ENCODE measurements at regions of chr17 and their contacts with region 1.

Region 1: DNA sequence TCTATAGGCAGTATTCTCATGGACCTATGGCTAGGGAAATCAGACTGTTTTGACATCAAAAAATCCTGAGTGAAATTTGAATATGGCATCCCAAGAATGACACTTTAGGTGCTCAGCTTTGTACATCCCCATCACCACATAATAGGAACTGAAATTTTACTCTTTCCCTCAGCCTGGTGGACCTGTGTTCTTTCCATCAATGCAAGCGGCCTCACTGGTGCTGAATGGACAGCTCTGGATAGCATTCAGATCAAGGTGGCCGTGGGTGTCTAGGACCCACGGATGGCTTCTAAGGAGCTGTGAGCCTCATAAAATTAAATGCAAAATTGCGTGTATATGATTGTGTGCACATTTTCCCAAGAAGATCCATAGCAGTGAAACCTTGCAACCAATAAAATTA is 152.6 kb downstream of the MAP2K6 start:
- DNase-seq: no peak
- H3K4me3 ChIP-seq: no peak overlapping the region
- H3K27ac ChIP-seq: no peak overlapping the region
- H3K4me1 ChIP-seq: peaks cover 0 to 4% (median 0%) of the 10 kb centered on the region in 4 donors
- H3K27me3 ChIP-seq: no peaks in the 10 kb centered on the region
- CTCF ChIP-seq: no peak

Region 2: DNA sequence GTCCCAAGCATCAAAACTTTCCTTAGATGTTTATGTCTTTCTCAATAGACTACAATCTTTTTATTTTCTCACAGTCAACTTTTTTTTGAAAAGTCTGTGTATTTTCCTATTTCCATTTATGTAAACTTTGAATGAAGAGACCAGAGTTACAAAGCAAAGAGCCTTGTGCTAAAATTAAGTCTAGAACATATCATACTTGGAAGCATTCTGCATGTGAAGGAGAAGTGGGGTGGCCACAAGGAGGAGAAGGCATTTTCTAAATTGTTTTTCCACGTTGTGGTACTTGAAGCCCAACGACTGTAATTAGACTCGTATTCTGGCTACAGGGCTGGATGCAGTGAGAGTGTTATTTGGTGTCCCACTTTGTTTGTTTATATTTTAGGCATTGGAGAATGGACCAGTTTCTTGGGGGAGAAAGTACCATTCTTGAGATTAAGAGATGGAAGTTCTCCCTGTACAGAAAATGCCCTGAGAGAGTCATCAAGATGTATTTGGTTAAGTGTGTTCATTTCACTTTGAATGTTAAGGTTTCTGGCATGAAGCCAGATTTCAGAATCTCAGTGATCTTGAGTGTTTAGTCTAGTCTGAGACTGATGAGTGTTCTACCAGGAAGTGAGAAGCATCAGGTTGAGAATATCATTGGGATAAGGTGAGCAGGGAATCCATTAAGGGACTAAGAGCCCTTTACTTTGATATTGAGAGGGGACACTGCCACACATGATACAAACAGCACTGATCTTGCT is 81.1 kb before region 1 on chr17:
- intact Hi-C with region 1: no loop called
- DNase-seq: no peak
- H3K4me3 ChIP-seq: peak overlapping the region; percentile 34 to 42
- H3K27ac ChIP-seq: peak overlapping the region; percentile 73 to 74
- H3K4me1 ChIP-seq: peaks cover 0 to 33% (median 10%) of the 10 kb centered on the region in 4 donors
- H3K27me3 ChIP-seq: no peaks in the 10 kb centered on the region
- CTCF ChIP-seq: peak in 1 of 2 experiments; percentile 11

Region 3: DNA sequence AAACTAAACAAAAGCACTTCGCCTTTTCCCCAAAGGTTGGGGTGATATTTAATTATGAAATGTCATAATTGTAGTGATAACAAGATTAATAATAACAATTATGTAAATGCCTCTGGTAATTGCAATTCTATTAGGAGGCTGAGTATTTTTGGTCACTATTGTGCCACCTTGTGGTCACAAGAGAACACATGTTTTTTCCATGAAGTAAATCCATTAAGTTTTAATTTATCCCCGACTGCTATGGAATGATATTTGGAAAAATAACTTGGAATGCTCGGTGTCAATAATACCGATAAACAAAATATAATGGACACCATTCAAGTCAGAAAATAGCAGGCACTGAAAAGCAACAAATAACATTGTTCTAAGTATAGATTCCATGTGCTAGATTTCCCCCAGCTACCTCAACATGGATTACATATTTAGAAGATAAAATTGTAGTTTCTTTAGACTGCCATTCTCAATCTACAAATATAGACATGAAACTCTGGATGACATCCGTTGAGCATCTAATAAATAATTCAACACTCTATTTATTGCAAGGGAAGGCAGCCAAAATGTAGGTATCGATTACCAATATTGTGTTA is 577.2 kb after region 1 on chr17:
- intact Hi-C with region 1: loop called (anchors 5 kb)
- DNase-seq: no peak
- H3K4me3 ChIP-seq: no peak overlapping the region
- H3K27ac ChIP-seq: no peak overlapping the region
- H3K4me1 ChIP-seq: no peaks in the 10 kb centered on the region
- H3K27me3 ChIP-seq: no peaks in the 10 kb centered on the region
- CTCF ChIP-seq: peak; percentile 66 to 69